ENCODE measurements at regions of chr15 and their contacts with region 1.

Region 1: GRCh38 chr15:68252925-68253534 is 23.5 kb upstream of the CLN6 start:
- DNase-seq: no peak
- ATAC-seq: peak in 3 of 4 donors; percentile 34 to 60 (median 58)
- H3K4me3 ChIP-seq: no peak overlapping the region
- H3K27ac ChIP-seq: no peak overlapping the region
- H3K4me1 ChIP-seq: peaks cover 5% of the 10 kb centered on the region
- H3K27me3 ChIP-seq: no peaks in the 10 kb centered on the region
- CTCF ChIP-seq: peak; percentile 93

Region 2: GRCh38 chr15:68279779-68280745 is 27.0 kb after region 1 on chr15:
- intact Hi-C with region 1: no loop called
- DNase-seq: no peak
- ATAC-seq: no peak
- H3K4me3 ChIP-seq: peak overlapping the region; percentile 85
- H3K27ac ChIP-seq: peak overlapping the region; percentile 97
- H3K4me1 ChIP-seq: peaks cover 60% of the 10 kb centered on the region
- H3K27me3 ChIP-seq: no peaks in the 10 kb centered on the region
- CTCF ChIP-seq: no peak

Region 3: DNA sequence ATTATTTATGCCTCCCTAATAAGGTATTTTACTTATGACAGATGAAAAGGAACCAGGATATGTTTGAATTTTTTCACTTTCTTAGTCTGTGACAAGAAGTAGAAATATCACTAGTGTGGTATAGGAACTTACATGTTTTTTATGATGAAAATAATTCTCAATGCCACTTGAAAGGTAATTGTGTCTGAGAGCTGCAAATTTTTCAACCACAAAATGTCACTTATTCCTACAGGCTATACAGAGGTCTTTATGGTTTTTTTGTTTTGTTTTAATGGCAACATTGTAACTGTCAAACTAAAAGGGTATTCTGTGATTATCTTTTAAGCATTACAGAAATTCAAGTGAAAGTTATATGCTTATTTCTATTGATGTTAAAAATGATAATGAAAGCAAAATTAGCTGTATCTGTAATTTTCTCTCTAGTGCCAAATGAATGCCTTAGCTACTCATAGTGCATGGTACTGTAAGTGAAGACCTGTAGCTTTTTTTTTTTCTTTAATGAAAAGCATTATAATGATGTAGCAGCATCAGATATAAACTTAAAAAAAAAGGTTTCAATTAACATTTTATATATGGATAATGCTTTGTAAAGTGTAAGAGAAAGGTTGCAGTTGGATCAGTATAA is 39.2 kb after region 1 on chr15:
- intact Hi-C with region 1: loop called (anchors 5 kb)
- DNase-seq: no peak
- ATAC-seq: no peak
- H3K4me3 ChIP-seq: peak overlapping the region; percentile 31
- H3K27ac ChIP-seq: peak overlapping the region; percentile 97
- H3K4me1 ChIP-seq: peaks cover 83% of the 10 kb centered on the region
- H3K27me3 ChIP-seq: no peaks in the 10 kb centered on the region
- CTCF ChIP-seq: no peak

Region 4: GRCh38 chr15:68316061-68316804 is 63.2 kb after region 1 on chr15:
- intact Hi-C with region 1: no loop called
- DNase-seq: no peak
- ATAC-seq: peak in 2 of 4 donors; percentile 34 to 37
- H3K4me3 ChIP-seq: no peak overlapping the region
- H3K27ac ChIP-seq: no peak overlapping the region
- H3K4me1 ChIP-seq: no peaks in the 10 kb centered on the region
- H3K27me3 ChIP-seq: peaks cover 0 to 2% (median 0%) of the 10 kb centered on the region in 3 donors
- CTCF ChIP-seq: no peak

Region 5: DNA sequence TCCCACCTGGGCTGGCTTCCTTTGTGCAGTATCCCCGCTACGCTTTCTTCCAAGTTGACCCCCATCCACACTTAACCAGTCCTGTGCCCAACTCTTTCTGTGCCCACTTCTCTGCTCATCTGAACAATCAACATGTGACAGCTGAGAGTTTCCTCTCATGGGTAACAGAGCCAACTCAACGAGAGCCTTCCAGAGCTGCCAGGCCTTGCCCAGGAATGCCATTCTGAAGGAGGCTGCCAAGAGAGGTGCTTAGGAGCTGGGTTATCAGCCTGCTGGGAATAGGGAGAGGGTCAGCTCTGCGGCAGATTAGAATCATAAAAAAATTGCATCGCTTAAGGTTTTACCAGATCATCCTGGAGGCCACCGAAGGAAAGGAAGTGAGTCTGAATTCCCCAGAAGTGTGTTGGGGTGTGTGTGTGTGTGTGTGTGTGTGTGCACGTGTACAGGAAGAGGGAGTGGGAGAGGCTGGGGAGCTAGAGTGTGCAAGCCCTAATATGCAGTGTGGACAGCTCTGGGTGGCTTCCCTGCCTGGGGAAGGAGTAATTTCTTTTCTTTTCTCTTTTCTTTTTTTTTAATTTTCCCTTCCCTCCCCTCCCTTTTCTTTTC is 112.2 kb after region 1 on chr15:
- intact Hi-C with region 1: loop called in 1 of 2 experiments (anchors 5 kb)
- DNase-seq: no peak
- ATAC-seq: peak; percentile 74 to 89 (median 84)
- H3K4me3 ChIP-seq: no peak overlapping the region
- H3K27ac ChIP-seq: peak overlapping the region; percentile 65
- H3K4me1 ChIP-seq: peaks cover 40% of the 10 kb centered on the region
- H3K27me3 ChIP-seq: peaks cover 0 to 4% (median 0%) of the 10 kb centered on the region in 3 donors
- CTCF ChIP-seq: no peak

Region 6: DNA sequence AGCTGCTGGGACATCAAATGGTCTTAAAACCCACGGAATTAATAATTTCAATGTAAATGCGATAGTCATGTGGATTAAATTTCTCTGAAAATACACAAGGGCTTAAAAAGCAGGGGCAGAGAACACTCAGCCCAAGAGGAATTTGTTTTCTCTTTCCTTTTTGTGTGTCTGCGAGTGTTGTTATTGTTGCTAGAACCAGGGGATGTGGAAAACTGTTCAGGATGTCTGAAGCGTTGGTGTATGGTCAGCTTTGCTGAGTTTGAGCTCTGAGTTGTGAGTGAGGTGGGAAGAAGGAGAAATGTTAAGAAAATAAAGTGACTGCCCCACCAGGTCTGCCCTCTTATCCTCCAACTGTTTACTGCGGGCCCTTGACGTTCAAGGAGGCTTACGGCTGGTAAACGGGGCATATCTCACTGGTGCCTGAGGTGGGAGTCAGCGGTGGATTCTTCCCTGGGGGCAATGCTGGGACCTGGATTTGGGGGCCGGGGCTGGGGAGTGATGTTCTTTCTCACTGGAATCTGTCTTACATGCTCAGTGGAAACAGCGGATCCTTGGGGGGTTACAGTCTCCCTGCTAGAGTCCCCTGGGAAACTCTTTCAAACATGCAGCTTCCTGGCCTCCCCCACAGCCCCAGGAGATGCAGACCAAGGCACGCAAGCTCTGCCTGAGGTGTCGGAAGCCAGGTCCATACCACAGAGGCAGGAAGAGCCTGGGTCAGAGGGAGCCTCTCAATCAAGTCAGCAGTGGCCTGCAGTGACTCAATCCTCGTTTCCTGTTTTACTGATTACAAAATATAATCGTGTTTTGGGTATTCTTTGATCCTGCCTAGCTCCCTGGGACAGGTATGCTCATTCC is 137.1 kb after region 1 on chr15:
- intact Hi-C with region 1: loop called in 1 of 2 experiments (anchors 5 kb)
- DNase-seq: no peak
- ATAC-seq: no peak
- H3K4me3 ChIP-seq: no peak overlapping the region
- H3K27ac ChIP-seq: no peak overlapping the region
- H3K4me1 ChIP-seq: no peaks in the 10 kb centered on the region
- H3K27me3 ChIP-seq: peaks cover 0 to 9% (median 0%) of the 10 kb centered on the region in 3 donors
- CTCF ChIP-seq: no peak

Region 7: DNA sequence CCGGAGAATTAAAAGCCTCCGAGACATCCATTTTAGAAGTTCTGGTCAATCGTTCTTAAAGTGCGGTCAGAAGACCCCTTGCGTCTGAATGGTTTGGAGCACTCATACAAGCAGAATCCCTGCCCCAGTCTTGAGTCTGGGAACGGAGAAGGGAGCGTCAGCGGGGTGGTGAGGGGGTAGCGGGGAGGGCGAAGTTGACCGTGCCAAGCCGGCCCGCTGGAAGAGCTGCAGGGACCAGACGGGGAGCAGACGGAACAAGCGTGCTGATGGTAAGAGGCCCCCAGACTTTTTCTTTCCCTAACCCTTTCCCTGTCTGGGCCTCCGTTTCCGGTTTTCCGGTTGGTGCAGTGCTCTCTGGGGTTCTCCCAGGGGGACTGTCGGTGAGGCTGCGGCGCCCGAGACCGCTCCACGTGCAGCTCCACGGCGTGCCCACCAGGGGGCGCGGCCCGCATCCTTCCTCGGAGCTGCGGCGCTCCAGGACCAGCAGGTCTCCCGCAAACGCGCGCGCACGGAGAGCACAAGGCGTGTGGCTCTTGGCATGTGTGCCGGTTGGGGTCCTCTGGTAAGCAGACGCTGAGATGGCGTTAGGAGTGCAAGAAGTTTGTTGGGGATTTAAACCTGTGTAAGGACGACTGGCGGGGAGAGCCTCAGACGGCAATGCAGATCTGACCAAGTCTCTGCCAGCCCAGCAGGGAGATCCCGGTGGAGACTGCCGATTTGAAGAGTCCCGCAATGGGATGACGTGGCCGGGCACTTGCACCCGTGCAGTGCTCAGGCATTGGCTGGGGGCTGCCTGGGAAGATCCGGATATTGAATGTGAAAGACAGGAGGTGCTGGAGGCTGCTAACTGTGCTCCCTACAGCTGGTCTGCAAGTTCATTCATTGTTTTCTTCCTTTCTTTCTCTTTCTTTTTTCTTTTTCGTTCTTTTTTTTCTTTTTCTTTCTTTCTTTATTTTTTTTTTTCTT is 306.6 kb after region 1 on chr15:
- intact Hi-C with region 1: loop called in 1 of 2 experiments (anchors 5 kb)
- DNase-seq: peak; percentile 79 to 90
- ATAC-seq: peak; percentile 92 to 98 (median 94)
- H3K4me3 ChIP-seq: peak overlapping the region; percentile 58
- H3K27ac ChIP-seq: no peak overlapping the region
- H3K4me1 ChIP-seq: no peaks in the 10 kb centered on the region
- H3K27me3 ChIP-seq: no peaks in the 10 kb centered on the region
- CTCF ChIP-seq: peak; percentile 95